GM23248 (cell line): ENCODE measurements at regions of chr6 and their contacts with region 1.

Region 1: GRCh38 chr6:134063966-134064445 is 11.6 kb upstream of the SLC2A12 start:
- DNase-seq: peak; percentile 81
- H3K4me3 ChIP-seq: no peak overlapping the region
- H3K27ac ChIP-seq: no peak overlapping the region
- H3K4me1 ChIP-seq: peaks cover 15% of the 10 kb centered on the region
- H3K27me3 ChIP-seq: no peaks in the 10 kb centered on the region

Region 2: GRCh38 chr6:133891149-133891926 is 172.7 kb before region 1 on chr6:
- in situ Hi-C with region 1: no loop called
- DNase-seq: peak; percentile 51
- H3K4me3 ChIP-seq: peak overlapping the region; percentile 68
- H3K27ac ChIP-seq: no peak overlapping the region
- H3K4me1 ChIP-seq: no peaks in the 10 kb centered on the region
- H3K27me3 ChIP-seq: peaks cover 82% of the 10 kb centered on the region

Region 3: DNA sequence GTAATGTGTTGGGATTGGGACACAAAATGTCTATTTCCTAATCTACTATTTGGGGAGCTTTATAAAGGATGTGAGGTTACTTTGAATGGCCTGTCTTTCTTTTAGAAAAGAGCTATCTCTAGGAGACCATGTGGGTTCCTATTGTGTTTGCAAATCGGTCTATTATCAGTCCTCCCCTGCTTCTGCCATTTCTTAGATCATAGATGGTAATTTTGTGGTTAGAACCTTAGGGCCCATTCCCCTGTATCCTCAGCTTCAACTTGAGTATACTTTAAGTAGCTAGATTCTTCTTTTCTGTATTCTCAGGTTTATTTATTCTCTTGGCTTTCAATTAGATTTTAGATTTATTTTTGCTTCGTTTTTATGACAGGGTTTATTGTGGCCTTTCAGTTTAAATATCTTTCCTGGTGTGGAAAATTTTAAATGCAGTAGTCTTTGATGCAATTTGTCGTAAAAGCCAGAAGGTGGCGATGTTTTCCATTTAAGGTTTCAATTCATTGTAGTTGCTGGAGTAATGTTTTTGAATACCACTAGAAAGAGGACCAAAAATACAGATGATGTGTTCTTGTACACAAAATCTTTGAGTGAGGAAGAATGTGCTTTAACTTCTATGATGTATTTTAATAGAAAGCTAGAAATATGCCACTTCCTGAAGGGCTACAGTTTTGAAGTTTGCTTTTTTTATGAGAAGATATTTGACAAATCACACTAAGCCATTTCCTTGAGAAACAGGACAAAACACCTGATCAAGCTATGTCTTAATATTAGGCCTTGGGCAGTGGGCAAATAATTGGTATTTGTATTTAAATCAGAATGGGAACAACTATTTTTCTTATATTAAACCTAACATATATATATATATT is 90.7 kb before region 1 on chr6:
- in situ Hi-C with region 1: loop called (anchors 5 kb)
- DNase-seq: peak; percentile 70
- H3K4me3 ChIP-seq: no peak overlapping the region
- H3K27ac ChIP-seq: no peak overlapping the region
- H3K4me1 ChIP-seq: peaks cover 6% of the 10 kb centered on the region
- H3K27me3 ChIP-seq: no peaks in the 10 kb centered on the region